CD8-positive, alpha-beta memory T cell (primary cell): ENCODE measurements at regions of chr12 and their contacts with region 1.

Region 1: DNA sequence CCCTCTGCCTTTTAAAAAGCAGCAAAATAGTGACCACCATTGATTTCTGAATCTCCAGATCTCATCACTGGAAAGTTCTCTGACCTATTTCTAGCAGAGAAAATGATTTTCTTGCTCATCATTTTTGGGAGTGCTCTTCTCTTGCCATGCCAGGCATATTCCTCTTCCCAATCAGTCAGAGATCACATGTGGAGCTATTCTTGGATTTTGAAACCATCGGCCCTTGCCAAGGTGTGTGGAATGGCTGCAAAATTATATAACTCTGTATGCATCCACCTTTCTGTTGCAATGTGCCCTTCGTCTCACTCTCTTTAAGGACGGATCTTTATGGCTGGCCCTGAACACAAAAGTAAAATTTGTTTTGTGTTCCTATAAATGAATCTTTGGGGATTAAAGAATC is 25.5 kb upstream of the LDHB start:
- DNase-seq: no peak
- H3K4me3 ChIP-seq: no peak overlapping the region
- H3K4me3 Mint-ChIP-seq: no peak overlapping the region
- H3K27ac ChIP-seq: no peak overlapping the region
- H3K27ac Mint-ChIP-seq: no peak overlapping the region
- H3K4me1 ChIP-seq: peaks cover 21% of the 10 kb centered on the region
- H3K4me1 Mint-ChIP-seq: peaks cover 16 to 22% (median 20%) of the 10 kb centered on the region in 3 donors
- H3K27me3 ChIP-seq: no peaks in the 10 kb centered on the region
- H3K27me3 Mint-ChIP-seq: peaks cover 4 to 5% of the 10 kb centered on the region in 2 donors

Region 2: DNA sequence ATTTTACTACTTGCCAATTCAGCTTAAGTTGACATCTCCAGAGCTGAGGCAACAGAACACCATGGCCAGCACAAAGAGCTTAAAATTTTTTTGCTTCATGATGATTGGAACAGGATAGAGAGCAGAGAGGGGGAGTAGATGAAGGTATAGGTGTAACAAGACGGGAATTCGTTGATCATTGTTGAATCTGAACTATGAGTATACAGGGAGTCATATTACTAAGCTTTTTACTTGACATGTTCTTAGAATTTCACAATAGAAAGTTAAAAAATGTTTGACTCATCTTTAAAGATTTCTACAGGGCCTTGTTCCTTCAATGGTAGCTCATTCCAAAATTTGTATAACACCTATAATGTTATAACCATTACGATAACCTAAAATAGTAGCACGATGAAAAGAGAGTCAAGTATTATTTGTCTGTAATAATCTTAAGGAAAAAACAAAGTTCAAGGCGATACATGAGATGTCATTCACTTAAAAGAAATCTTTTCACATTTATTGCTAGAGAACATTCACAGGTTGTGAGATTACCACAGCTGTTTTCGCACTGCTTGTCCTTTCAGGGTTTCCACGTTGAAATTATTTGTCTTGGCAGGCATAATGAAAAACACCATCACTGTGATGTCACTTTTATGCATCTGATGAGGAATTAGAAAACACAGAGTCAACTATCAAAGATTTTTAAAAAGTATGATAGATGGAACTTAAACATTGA is 123.1 kb before region 1 on chr12:
- CTCF ChIA-PET with region 1: no interaction called
- POLR2A ChIA-PET with region 1: no interaction called
- DNase-seq: no peak
- H3K4me3 ChIP-seq: no peak overlapping the region
- H3K4me3 Mint-ChIP-seq: no peak overlapping the region
- H3K27ac ChIP-seq: no peak overlapping the region
- H3K27ac Mint-ChIP-seq: no peak overlapping the region
- H3K4me1 ChIP-seq: no peaks in the 10 kb centered on the region
- H3K4me1 Mint-ChIP-seq: no peaks in the 10 kb centered on the region
- H3K27me3 ChIP-seq: no peaks in the 10 kb centered on the region
- H3K27me3 Mint-ChIP-seq: peaks cover 0 to 3% of the 10 kb centered on the region in 2 donors

Region 3: GRCh38 chr12:21697904-21698630 is 15.0 kb after region 1 on chr12:
- CTCF ChIA-PET with region 1: interaction called, 11 read pairs
- POLR2A ChIA-PET with region 1: no interaction called
- DNase-seq: peak in 2 of 5 donors; percentile 23 to 33
- H3K4me3 ChIP-seq: no peak overlapping the region
- H3K4me3 Mint-ChIP-seq: peak overlapping the region in 2 of 7 donors; percentile 25 to 32
- H3K27ac ChIP-seq: no peak overlapping the region
- H3K27ac Mint-ChIP-seq: no peak overlapping the region
- H3K4me1 ChIP-seq: peaks cover 8% of the 10 kb centered on the region
- H3K4me1 Mint-ChIP-seq: peaks cover 8 to 16% (median 14%) of the 10 kb centered on the region in 3 donors
- H3K27me3 ChIP-seq: no peaks in the 10 kb centered on the region
- H3K27me3 Mint-ChIP-seq: no peaks in the 10 kb centered on the region